Mammary epithelial cell (primary cell): ENCODE measurements at regions of chr12 and their contacts with region 1.

Region 1: GRCh38 chr12:105934274-105934673 is 204.5 kb downstream of the NUAK1 start:
- DNase-seq: peak; percentile 95
- H3K4me3 ChIP-seq: peak overlapping the region in 1 of 3 experiments; percentile 29
- H3K27ac ChIP-seq: peak overlapping the region; percentile 78
- H3K4me1 ChIP-seq: peaks cover 71% of the 10 kb centered on the region
- H3K27me3 ChIP-seq: no peaks in the 10 kb centered on the region
- CTCF ChIP-seq: no peak

Region 2: GRCh38 chr12:105977652-105978051 is 43.4 kb after region 1 on chr12:
- CTCF ChIA-PET with region 1: no interaction called
- dilution Hi-C with region 1: no loop called
- in situ Hi-C with region 1: no loop called
- intact Hi-C with region 1: loop called (anchors 5 kb)
- DNase-seq: peak; percentile 65
- H3K4me3 ChIP-seq: no peak overlapping the region
- H3K27ac ChIP-seq: no peak overlapping the region
- H3K4me1 ChIP-seq: peaks cover 27% of the 10 kb centered on the region
- H3K27me3 ChIP-seq: no peaks in the 10 kb centered on the region
- CTCF ChIP-seq: no peak